Heart left ventricle (tissue), 16 donors: ENCODE measurements at regions of chr1 and their contacts with region 1.

Region 1: GRCh38 chr1:156625436-156626078 is 6.3 kb downstream of the HAPLN2 start:
- DNase-seq: peak in 4 of 5 donors; percentile 46 to 81 (median 64)
- ATAC-seq: peak; percentile 40 to 67 (median 48)
- H3K4me3 ChIP-seq: peak overlapping the region; percentile 26 to 59 (median 50)
- H3K27ac ChIP-seq: peak overlapping the region in 9 of 12 donors; percentile 14 to 81 (median 67)
- H3K4me1 ChIP-seq: peaks cover 5 to 36% (median 22%) of the 10 kb centered on the region in 12 donors
- H3K27me3 ChIP-seq: peaks cover 3 to 67% (median 50%) of the 10 kb centered on the region in 9 donors
- CTCF ChIP-seq: peak; percentile 62 to 85 (median 80)
- POLR2A ChIP-seq: no peak

Region 2: DNA sequence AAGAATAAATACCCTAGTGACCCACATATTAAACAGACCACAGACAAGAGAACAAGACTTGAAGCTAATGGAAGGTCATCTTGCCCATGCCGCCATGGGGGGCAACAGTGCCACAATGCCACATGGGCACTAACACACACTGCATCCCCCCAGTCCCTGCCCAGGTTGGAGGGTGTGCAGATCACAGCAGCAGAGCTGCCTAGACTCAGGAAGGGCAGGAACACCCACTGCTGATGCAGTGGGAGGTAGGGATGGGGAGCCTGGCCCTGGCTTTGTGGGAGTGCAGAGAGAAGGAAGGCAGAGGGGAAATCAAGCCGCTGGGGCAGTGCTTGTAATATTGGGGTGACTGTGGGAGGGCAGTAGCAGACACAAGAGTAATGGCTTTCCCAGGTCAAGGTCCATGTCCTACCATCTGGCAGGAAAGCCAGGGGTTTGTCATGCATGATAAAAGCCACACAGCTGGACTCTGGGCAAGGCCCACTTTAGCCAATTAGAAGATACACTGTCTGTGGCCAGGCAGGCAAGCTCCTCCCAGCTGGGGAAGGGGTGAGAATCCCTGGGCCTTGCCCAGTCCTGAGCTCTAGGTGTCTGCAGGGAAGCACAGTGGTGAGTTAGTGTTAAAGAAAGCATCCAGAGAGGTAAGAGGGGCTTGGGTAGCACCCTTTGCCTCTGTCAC is 99.6 kb before region 1 on chr1:
- intact Hi-C with region 1: no loop called
- DNase-seq: no peak
- ATAC-seq: no peak
- H3K4me3 ChIP-seq: no peak overlapping the region
- H3K27ac ChIP-seq: no peak overlapping the region
- H3K4me1 ChIP-seq: peaks cover 0 to 25% (median 10%) of the 10 kb centered on the region in 12 donors
- H3K27me3 ChIP-seq: no peaks in the 10 kb centered on the region
- CTCF ChIP-seq: no peak
- POLR2A ChIP-seq: no peak

Region 3: GRCh38 chr1:156677616-156678596 is 52.3 kb after region 1 on chr1:
- intact Hi-C with region 1: loop called in 6 of 10 experiments (anchors 2 to 5 kb)
- DNase-seq: peak; percentile 80 to 89 (median 85)
- ATAC-seq: peak; percentile 35 to 79 (median 70)
- H3K4me3 ChIP-seq: peak overlapping the region in 11 of 12 donors; percentile 51 to 92 (median 69)
- H3K27ac ChIP-seq: peak overlapping the region in 11 of 12 donors; percentile 64 to 98 (median 91)
- H3K4me1 ChIP-seq: peaks cover 4 to 51% (median 33%) of the 10 kb centered on the region in 12 donors
- H3K27me3 ChIP-seq: peaks cover 0 to 47% (median 0%) of the 10 kb centered on the region in 9 donors
- CTCF ChIP-seq: peak; percentile 75 to 98 (median 90)
- POLR2A ChIP-seq: no peak

Region 4: DNA sequence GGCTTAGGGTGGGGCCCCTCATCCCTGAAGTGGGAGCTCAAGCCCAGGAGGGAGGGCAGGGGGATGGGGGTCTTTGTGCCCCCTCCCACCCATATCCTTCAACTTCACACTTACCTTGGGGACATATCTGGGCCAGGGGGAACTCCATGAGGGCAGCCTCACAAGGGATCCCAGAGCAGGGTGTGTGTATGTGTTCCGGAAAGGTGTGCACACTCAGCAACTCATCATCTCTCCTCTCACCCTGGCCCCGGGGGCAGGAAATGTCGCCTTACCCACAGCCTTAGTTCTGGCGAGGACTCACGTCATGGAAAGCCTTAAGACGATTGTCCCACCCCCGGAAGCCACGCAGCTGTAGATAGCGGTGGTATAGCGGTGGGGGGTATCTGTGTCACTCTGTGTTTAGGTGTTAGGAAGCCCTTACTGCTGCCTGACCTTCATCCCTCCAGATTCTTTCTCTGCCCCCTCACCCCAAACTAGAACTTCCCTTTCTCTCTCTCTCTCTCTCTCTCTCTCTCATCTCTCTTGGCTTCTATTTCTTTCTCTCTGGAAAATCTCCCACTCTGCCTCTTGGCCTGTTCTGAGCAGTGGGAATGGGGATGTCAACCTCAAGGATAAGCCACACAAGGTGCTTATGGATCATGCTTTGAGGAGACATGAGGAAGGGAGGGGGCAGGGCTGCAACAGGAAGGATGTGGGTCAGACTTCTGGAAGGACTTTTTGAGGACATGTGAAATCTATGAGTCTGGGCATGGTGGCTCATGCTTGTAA is 191.2 kb after region 1 on chr1 and contains the start of gene SH2D2A:
- intact Hi-C with region 1: no loop called
- DNase-seq: peak; percentile 60 to 73 (median 71)
- ATAC-seq: peak; percentile 20 to 67 (median 34)
- H3K4me3 ChIP-seq: peak within 1 kb of the TSS in 11 of 12 donors; percentile 3 to 55 (median 48)
- H3K27ac ChIP-seq: peak within 1 kb of the TSS; percentile 39 to 90 (median 78)
- H3K4me1 ChIP-seq: peaks cover 5 to 37% (median 18%) of the 10 kb centered on the region in 12 donors
- H3K27me3 ChIP-seq: peaks cover 0 to 8% (median 0%) of the 10 kb centered on the region in 9 donors
- CTCF ChIP-seq: no peak
- POLR2A ChIP-seq: no peak
- total RNA-seq, gene SH2D2A: 0.52 to 8.2 (median 1.9) TPM